Transverse colon (tissue), 4 donors: ENCODE measurements at regions of chr17 and their contacts with region 1.

Region 1: GRCh38 chr17:17774009-17774881 is 62.5 kb downstream of the SREBF1 start:
- DNase-seq: peak; percentile 83
- H3K4me3 ChIP-seq: no peak overlapping the region
- H3K27ac ChIP-seq: peak overlapping the region; percentile 81 to 89 (median 85)
- H3K4me1 ChIP-seq: peaks cover 26 to 49% (median 36%) of the 10 kb centered on the region in 4 donors
- H3K27me3 ChIP-seq: no peaks in the 10 kb centered on the region
- CTCF ChIP-seq: peak; percentile 43 to 84 (median 64)
- EP300 ChIP-seq: peak; percentile 55
- POLR2A ChIP-seq: no peak

Region 2: DNA sequence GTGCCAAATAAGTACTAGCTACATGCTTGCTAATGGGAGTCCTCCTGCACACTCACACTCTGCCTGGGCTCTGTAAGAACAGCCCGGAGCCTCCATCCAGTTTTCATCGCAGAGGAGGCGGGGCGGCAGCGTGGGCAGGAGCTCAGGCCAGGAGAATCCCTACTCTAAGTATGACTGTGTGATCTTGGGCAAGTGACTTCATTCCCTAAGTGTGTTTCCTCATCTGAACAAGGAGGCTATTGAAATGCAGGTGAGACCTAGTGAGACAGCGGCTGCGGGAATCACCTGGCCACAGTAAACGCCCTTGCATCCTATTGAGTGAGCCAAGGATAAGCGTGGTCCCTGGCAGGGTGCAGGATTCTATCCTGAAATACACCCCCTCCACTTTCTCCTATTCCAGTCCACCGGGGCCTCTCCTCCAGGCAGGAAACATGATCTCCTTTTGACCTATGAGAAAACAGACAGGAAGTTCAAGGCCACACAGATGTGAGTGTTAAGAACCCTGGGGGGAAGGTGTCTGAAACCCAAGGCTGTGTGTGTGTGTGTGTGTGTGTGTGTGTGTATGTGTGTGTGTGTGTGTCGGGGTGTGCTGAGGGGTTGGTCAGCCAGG is 98.2 kb before region 1 on chr17:
- in situ Hi-C with region 1: loop called in 3 of 4 experiments (anchors 10 to 25 kb)
- intact Hi-C with region 1: no loop called
- DNase-seq: no peak
- H3K4me3 ChIP-seq: no peak overlapping the region
- H3K27ac ChIP-seq: no peak overlapping the region
- H3K4me1 ChIP-seq: peaks cover 0 to 6% (median 1%) of the 10 kb centered on the region in 4 donors
- H3K27me3 ChIP-seq: no peaks in the 10 kb centered on the region
- CTCF ChIP-seq: no peak
- EP300 ChIP-seq: no peak
- POLR2A ChIP-seq: no peak

Region 3: GRCh38 chr17:18087610-18088491 is 313.6 kb after region 1 on chr17 and contains the start of gene DRG2:
- in situ Hi-C with region 1: no loop called
- intact Hi-C with region 1: no loop called
- DNase-seq: peak; percentile 94
- H3K4me3 ChIP-seq: peak within 1 kb of the TSS; percentile 55 to 89 (median 70)
- H3K27ac ChIP-seq: peak within 1 kb of the TSS; percentile 69 to 84 (median 82)
- H3K4me1 ChIP-seq: peaks cover 0 to 18% (median 16%) of the 10 kb centered on the region in 4 donors
- H3K27me3 ChIP-seq: no peaks in the 10 kb centered on the region
- CTCF ChIP-seq: peak in 2 of 5 experiments; percentile 12
- EP300 ChIP-seq: no peak
- POLR2A ChIP-seq: peak; percentile 41
- total RNA-seq, gene DRG2: 27.9 to 90.6 (median 33.3) TPM